ENCODE measurements at regions of chr22 and their contacts with region 1.

Region 1: DNA sequence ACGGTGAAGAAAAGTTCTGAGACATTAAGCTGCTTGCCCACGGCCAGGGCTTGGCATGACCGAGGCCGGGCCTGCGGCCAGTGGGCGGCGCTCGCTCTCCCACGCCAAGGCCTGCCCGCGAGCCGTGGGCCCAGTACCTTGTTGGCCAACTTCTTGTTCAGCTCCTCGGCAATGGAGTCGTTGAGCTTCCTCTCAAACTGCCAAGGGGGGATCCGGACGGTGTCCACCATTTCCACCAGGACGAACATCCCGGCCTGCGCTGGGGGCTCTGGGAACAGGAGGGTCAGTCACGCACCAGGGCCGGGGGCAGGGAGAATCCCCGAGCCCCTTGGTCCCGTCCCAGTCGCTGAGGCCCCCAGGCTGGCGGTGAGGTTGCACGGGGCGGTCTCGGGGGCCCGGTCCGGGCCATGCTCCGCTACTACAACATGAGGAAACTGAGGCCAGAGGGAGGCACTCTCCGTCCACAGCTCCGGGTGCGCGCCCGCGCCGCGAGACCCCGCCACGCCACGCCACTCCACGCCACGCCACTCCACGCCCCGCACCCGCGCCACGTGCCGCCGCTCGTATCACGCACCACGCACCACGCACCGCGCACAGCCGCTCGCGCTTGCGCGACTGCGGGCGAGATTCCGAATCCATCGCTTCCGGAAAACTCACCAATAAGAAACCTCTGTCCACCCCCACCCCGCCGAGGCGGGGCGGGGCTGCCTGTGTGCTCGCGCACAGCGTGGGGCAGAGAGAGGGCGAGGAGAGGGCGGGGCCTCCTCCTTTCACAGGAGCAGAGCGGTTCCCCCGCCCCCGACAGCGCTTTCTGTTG is at the start of gene POLR3H:
- DNase-seq: peak; percentile 99
- H3K4me3 ChIP-seq: peak within 1 kb of the TSS; percentile 98
- H3K27ac ChIP-seq: peak within 1 kb of the TSS; percentile 96
- H3K4me1 ChIP-seq: peaks cover 8% of the 10 kb centered on the region
- H3K27me3 ChIP-seq: no peaks in the 10 kb centered on the region
- CTCF ChIP-seq: peak; percentile 73
- total RNA-seq, gene POLR3H: 79.5 and 92.1 TPM in 2 replicates

Region 2: GRCh38 chr22:41458161-41458728 is 85.8 kb before region 1 on chr22:
- CTCF ChIA-PET with region 1: no interaction called
- POLR2A ChIA-PET with region 1: no interaction called
- intact Hi-C with region 1: no loop called
- DNase-seq: no peak
- H3K4me3 ChIP-seq: no peak overlapping the region
- H3K27ac ChIP-seq: no peak overlapping the region
- H3K4me1 ChIP-seq: no peaks in the 10 kb centered on the region
- H3K27me3 ChIP-seq: no peaks in the 10 kb centered on the region
- CTCF ChIP-seq: no peak

Region 3: DNA sequence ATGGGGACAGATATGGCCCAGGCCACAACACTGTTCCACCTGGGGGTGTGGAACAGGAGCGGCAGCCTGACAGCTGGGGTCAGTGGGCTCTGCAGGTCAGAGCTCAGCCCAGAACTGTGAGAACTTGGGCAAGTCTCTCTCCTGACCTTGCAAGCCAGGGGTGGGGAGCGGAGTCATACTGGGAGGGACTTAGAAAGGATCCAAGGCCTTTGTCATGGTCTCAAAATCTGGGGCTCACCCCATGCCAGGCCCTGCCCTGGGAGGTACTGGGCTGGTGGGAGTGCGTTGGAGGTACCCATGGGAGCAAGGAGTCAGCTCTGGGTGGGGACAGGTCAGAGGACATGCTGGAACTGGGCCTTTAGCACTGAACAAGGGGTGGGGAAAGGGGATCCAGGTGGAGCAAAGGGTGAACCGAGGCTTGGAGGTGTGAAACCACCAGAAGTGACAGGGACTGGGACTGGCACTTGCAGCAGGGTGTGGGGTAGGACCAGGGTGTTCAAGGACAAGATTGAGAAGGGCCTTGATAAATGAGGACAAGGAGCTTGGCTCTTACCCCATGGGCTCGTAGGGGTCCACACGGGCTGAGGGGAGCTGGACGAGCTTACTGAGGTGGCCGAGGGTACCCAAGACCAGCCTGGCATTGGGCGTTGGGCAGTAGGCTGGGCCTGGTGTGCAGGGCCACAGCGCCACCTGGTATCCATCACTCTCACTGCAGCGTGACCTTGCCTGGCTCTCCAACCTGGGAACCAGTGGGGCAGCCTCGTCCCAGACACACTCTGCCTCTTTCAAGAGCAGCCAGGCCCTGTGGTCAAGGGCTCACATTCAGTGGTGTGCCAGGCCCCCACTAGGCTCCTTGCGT is 52.9 kb after region 1 on chr22:
- CTCF ChIA-PET with region 1: interaction called, 5 read pairs
- POLR2A ChIA-PET with region 1: no interaction called
- intact Hi-C with region 1: loop called (anchors 5 kb)
- DNase-seq: peak; percentile 49
- H3K4me3 ChIP-seq: no peak overlapping the region
- H3K27ac ChIP-seq: peak overlapping the region; percentile 29
- H3K4me1 ChIP-seq: no peaks in the 10 kb centered on the region
- H3K27me3 ChIP-seq: no peaks in the 10 kb centered on the region
- CTCF ChIP-seq: peak; percentile 91